Activated T-helper 1 cell treated with anti-CD3 and anti-CD28 coated beads, Interleukin-12 subunit alpha, Interleukin-12 subunit beta, Interleukin-2, Interleukin-4 antibody, amounts not matched to agents 30 ng/mL and 10 ng/mL and 1 ng/mL, durations not matched to agents 14 hours and 24 hours and 36 hours (primary cell): ENCODE measurements at regions of chr20 and their contacts with region 1.

Region 1: GRCh38 chr20:46307139-46307998 is 929 bp downstream of the CDH22 start:
- DNase-seq: peak; percentile 45
- H3K4me3 Mint-ChIP-seq: peak overlapping the region; percentile 31
- H3K27ac Mint-ChIP-seq: no peak overlapping the region
- H3K4me1 Mint-ChIP-seq: peaks cover 7% of the 10 kb centered on the region
- H3K27me3 Mint-ChIP-seq: peaks cover 71% of the 10 kb centered on the region

Region 2: DNA sequence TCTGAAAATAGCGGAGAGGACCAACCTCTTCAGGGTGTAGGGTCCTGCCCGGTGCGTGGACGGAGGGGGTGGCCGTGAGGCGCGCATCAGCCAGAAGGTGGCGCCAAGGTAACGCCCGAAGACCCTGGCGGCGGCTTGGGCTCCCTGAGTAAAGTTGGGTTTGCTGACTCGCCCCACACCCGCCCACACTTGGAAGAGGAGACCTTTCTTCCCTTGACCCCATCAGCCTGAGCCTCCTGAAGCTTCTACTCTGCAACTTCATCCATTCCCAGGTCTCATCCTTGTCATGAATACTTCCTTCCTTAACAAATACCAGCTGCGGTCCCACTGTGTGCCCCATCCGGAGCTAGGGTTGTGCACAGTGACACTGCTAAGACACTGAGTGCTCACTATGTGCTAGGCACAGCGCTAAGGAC is 174.7 kb before region 1 on chr20:
- intact Hi-C with region 1: loop called (anchors 1 kb)
- DNase-seq: peak; percentile 34
- H3K4me3 Mint-ChIP-seq: no peak overlapping the region
- H3K27ac Mint-ChIP-seq: no peak overlapping the region
- H3K4me1 Mint-ChIP-seq: no peaks in the 10 kb centered on the region
- H3K27me3 Mint-ChIP-seq: peaks cover 29% of the 10 kb centered on the region

Region 3: DNA sequence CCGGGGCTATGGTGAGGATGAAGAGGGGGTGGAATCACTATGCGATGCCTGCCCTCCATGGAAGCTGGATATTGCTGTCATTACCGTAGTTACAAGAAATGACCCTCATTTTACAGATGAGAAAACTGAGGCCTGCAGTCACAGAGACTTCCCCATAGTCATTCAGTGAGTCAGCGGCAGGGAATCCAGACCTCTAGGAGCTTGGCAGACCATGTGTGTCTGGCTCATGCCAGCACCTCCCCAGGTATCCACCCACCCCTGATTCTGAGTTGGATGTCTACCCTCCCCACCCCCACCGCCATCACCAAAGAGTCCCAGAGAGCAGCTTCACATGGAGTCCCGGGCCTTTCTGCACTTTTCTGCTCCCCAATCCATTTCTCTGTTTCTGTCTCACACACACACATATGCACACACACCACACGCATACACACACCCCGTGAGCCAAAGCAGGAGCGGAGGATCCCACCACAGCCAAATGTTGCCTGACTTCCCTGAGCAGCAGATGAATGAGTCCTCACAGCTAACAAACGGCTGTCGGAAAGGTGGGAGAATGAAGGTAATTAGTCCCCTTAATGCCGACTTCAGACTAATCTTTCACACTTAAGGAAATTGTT is 23.8 kb before region 1 on chr20:
- intact Hi-C with region 1: no loop called
- DNase-seq: no peak
- H3K4me3 Mint-ChIP-seq: no peak overlapping the region
- H3K27ac Mint-ChIP-seq: no peak overlapping the region
- H3K4me1 Mint-ChIP-seq: no peaks in the 10 kb centered on the region
- H3K27me3 Mint-ChIP-seq: peaks cover 2% of the 10 kb centered on the region

Region 4: GRCh38 chr20:46363800-46364634 is 56.6 kb after region 1 on chr20:
- intact Hi-C with region 1: loop called (anchors 5 kb)
- DNase-seq: peak; percentile 82
- H3K4me3 Mint-ChIP-seq: peak overlapping the region; percentile 93
- H3K27ac Mint-ChIP-seq: peak overlapping the region; percentile 82
- H3K4me1 Mint-ChIP-seq: peaks cover 66% of the 10 kb centered on the region
- H3K27me3 Mint-ChIP-seq: no peaks in the 10 kb centered on the region

Region 5: DNA sequence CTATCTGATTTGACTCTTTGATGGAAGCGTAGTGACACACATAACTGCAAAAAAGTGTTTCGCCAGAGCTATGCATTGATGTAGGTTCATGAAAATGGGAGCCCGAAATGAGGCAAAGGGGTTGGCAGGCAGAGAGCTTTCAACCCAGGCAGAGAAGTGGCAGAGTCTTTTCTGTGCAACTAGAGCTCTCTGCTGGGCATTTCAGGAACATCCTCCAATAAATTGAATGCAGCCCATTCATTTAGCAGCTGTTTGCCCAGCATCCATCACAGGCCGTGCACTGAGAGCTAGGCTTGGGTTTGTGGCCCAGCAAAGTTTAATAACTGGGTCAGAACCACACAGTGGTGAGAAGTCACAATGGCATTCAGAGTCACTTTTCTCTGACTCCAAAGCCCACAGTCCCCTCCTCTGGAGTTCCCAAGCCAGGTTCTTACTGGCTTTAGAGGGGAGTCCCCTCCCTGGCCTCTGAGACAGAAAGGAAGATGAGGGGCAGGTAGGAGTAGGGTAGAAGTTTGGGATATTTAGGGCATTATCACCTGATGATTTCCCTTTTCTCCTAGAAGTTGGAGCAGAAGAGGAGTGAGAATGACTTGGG is 130.9 kb after region 1 on chr20:
- intact Hi-C with region 1: loop called (anchors 1 kb)
- DNase-seq: no peak
- H3K4me3 Mint-ChIP-seq: no peak overlapping the region
- H3K27ac Mint-ChIP-seq: no peak overlapping the region
- H3K4me1 Mint-ChIP-seq: no peaks in the 10 kb centered on the region
- H3K27me3 Mint-ChIP-seq: peaks cover 27% of the 10 kb centered on the region

Region 6: DNA sequence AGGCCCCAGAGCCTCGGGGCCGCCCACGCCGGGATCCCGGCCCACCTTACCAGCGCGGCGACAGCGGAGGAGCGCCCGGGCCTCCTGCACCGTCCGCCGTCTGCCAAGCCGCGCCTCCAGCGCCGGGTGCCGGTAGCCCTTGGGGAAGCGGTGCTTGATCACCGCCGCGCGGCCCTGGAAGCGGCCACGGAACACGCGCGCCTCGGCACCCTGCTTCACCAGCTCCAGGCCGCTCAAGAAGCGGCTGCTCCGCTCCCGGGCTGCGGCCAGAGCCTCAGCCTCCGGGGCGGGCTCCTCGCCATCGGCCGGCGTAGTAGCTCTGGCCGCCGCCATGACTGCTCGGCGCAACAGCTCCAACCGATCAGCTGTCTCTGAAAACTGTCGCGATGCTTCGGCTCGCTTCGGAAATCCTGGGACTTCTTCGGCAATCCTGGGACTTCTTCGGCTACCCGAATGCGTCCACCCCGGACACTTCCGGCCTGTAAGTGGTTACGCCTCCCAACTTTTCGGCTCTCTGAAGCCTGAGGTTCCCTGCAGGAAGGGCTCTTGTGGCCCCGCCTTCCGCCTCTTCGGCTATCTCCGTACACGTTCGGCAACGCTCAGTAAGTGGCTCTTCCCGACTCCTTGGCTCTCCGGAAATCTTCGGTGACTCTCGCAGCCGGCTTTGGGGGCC is 381.8 kb after region 1 on chr20 and contains the start of gene TP53RK:
- intact Hi-C with region 1: loop called (anchors 2 kb)
- DNase-seq: peak; percentile 94
- H3K4me3 Mint-ChIP-seq: peak within 1 kb of the TSS; percentile 88
- H3K27ac Mint-ChIP-seq: peak within 1 kb of the TSS; percentile 91
- H3K4me1 Mint-ChIP-seq: peaks cover 52% of the 10 kb centered on the region
- H3K27me3 Mint-ChIP-seq: peaks cover 3% of the 10 kb centered on the region
- total RNA-seq, gene TP53RK: 16.8 and 18.5 TPM in 2 replicates